Activated B cell treated with CpG ODN at 0.5 μM for 24 hours (primary cell): ENCODE measurements at regions of chr11 and their contacts with region 1.

Region 1: DNA sequence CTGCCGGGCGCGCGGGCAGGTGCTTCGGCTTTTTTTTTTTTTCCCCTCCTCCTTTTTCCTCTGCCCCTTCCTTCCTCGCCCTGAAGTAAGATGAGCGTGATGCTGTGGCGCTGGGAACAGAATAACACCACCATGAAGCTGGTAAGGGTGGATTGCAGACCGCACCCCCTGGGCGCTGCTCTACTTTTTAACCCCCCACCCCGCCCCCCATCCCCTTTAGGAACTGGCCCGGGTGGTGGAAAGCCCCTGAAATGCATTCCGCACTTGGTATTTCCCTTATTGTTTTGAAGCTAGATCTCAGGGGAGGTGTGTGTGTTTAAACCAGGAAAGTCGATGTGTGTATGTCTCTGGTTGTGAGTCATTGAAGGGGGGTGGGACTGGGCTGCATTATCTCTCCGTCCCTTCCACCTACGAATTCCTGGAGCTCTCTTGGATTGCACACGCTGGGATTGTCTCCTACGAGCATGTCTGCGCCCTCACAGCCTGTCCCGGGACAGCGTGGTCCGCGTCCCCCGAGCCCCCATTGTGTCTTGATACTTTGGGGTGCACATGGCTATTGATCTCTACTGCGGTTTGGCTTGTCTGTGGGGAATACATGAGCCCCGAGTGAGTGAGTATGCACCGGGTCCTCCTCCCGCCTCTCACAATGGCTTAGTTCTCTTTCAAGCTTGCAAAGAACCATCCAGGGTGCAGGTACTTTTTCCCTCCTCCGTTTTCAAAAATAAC is 64.9 kb downstream of the NAV2 start:
- DNase-seq: peak; percentile 27
- ATAC-seq: peak; percentile 90
- H3K4me3 Mint-ChIP-seq: peak overlapping the region; percentile 87
- H3K27ac Mint-ChIP-seq: peak overlapping the region; percentile 82
- H3K4me1 Mint-ChIP-seq: peaks cover 20% of the 10 kb centered on the region
- H3K27me3 Mint-ChIP-seq: peaks cover 38% of the 10 kb centered on the region
- CTCF ChIP-seq: no peak

Region 2: DNA sequence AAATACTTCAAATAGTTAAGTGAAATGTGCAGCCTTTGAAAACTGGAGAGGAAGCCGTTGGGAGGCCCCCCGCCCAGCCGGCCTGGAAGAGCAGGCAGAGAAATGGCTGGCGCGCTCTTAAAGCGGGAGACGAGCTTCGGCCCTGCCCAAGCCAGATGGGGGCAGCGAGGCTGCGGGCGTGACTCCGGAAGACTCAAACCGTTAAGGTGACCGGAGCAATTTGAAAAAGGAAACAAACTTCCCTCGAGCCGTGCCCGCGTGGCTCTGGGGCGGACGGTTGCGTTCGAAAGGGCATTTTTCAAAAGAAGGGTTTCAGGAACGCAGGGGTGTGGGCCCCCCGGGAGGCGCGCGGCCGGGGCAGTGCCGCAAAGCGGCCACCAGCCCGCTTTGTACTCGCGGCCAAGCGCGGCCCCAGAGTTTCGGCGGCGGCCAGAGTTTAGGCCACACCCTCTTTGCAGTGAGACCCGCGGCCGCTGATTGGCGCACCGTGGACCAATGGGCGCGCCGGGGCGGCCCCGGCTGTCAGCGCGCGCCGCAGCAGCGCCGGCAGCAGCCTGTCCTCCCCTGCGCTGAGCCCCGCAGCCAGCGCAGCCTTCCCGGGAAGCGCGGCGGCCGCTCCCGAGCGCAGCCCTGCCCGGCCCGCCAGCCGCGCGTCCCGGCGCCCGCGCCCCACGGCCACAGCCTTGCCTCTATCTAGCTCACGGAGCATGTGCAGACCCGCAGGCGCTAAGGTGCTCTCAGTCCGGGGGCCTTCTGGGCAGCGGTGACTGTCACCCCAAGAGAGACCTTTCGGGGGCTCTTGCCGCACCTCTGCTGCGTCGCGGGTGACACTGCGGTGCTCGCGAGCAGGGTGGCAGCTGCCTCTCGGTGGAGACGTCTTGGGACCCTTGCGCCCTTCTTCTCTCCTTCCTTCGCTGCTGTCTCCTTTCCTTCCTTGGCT is 65.0 kb before region 1 on chr11 and contains the start of gene NAV2:
- CTCF ChIA-PET with region 1: no interaction called
- POLR2A ChIA-PET with region 1: interaction called, 3 read pairs
- intact Hi-C with region 1: loop called (anchors 2 kb)
- DNase-seq: peak; percentile 63
- ATAC-seq: peak; percentile 100
- H3K4me3 Mint-ChIP-seq: peak within 1 kb of the TSS; percentile 87
- H3K27ac Mint-ChIP-seq: no peak within 1 kb of the TSS
- H3K4me1 Mint-ChIP-seq: peaks cover 25% of the 10 kb centered on the region
- H3K27me3 Mint-ChIP-seq: peaks cover 39% of the 10 kb centered on the region
- CTCF ChIP-seq: no peak
- total RNA-seq, gene NAV2: 9.0 and 10.3 TPM in 2 replicates